ENCODE measurements at regions of chr15 and their contacts with region 1.

Region 1: GRCh38 chr15:68559345-68560310 is 19.2 kb upstream of the CORO2B start:
- DNase-seq: peak; percentile 72 to 89 (median 80)
- H3K4me3 ChIP-seq: peak overlapping the region; percentile 38 to 73 (median 58)
- H3K27ac ChIP-seq: peak overlapping the region in 17 of 59 donors; percentile 1 to 70 (median 40)
- H3K27me3 ChIP-seq: peaks cover 0 to 3% (median 0%) of the 10 kb centered on the region in 45 donors
- CTCF ChIP-seq: peak; percentile 68 to 100 (median 98)

Region 2: DNA sequence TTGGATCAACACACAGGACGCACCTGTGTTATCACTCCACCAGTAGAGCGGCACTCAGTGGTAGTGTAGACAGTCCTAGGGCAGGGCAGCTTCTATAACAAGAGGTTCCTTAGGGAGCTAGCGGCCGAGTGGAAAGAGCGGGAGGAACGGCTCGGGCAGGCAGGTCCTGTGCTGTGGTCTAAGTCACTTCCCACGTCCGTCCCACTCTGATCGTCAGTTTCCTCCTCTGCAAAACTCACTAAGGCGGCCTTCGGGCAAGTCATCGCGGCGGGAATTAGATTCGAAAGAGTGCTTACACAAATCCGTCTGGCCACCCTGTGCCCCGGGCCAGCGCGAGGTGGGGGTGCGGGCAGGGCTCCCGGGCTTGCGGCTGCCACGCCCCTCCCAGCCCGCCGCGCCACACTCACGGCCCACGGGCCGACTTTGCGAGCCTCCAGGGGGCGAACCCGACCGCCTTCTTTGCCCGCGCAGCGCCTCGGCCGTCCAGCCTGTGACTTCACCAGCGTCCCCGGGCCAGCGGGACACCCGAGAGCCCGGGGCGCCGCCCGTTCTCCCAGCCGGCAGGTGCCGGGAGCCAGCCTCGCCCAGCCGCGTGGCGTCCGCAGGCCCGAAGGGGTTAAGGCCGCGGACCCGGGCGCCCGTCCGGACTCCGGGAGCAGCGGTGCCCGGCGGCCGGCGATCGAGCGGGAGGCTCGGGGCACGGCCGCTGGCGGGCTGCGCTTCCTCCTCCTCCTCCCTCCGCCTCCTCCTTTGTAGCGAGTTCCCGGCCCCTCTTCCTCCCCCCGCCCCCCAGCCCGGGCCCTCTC is 18.7 kb after region 1 on chr15:
- intact Hi-C with region 1: loop called in 1 of 2 experiments (anchors 2 kb)
- DNase-seq: peak; percentile 72 to 89 (median 80)
- H3K4me3 ChIP-seq: peak overlapping the region; percentile 54 to 89 (median 77)
- H3K27ac ChIP-seq: peak overlapping the region; percentile 65 to 98 (median 96)
- H3K27me3 ChIP-seq: no peaks in the 10 kb centered on the region
- CTCF ChIP-seq: peak in 55 of 56 donors; percentile 49 to 94 (median 74)

Region 3: GRCh38 chr15:68658151-68658550 is 98.5 kb after region 1 on chr15:
- intact Hi-C with region 1: loop called in 1 of 2 experiments (anchors 5 kb)
- DNase-seq: peak; percentile 51 to 78 (median 67)
- H3K4me3 ChIP-seq: no peak overlapping the region
- H3K27ac ChIP-seq: peak overlapping the region in 53 of 59 donors; percentile 4 to 98 (median 72)
- H3K27me3 ChIP-seq: no peaks in the 10 kb centered on the region
- CTCF ChIP-seq: peak in 5 of 56 donors; percentile 5 to 20 (median 6)

Region 4: DNA sequence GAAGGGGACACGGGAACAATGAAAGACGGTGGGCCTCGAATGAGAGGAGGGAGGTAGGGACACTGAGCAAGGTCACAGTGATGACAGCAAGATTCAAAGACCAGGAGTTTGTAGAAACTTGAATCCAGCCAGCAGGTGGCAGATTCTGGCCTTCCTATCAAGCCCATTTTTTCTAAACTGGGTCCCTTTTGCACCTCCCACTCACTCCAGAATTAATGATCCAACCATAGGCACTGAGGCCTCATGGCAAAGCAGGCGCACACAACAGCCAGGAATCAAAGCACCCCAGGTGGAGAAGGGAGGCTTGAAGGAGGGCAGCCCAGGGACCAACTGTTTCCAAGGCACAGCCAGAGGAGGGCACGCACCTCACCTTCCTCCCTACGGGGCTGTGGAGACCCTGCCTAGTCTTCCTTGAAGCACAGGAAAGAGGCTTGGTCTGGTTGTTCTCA is 170.9 kb after region 1 on chr15:
- intact Hi-C with region 1: loop called in 1 of 2 experiments (anchors 5 kb)
- DNase-seq: peak in 9 of 10 donors; percentile 28 to 77 (median 58)
- H3K4me3 ChIP-seq: no peak overlapping the region
- H3K27ac ChIP-seq: peak overlapping the region in 53 of 59 donors; percentile 12 to 89 (median 65)
- H3K27me3 ChIP-seq: no peaks in the 10 kb centered on the region
- CTCF ChIP-seq: peak; percentile 64 to 89 (median 78)